GM10248 (cell line): ENCODE measurements at regions of chr1 and their contacts with region 1.

Region 1: GRCh38 chr1:30718636-30719405 is 4.6 kb downstream of the MATN1 start:
- DNase-seq: peak; percentile 68
- CTCF ChIP-seq: peak; percentile 95

Region 2: GRCh38 chr1:30732277-30732996 is 13.6 kb after region 1 on chr1:
- CTCF ChIA-PET with region 1: interaction called, 81 read pairs
- POLR2A ChIA-PET with region 1: interaction called, 8 read pairs
- DNase-seq: peak; percentile 68
- CTCF ChIP-seq: no peak

Region 3: GRCh38 chr1:30743584-30744059 is 24.8 kb after region 1 on chr1:
- CTCF ChIA-PET with region 1: interaction called, 35 read pairs
- POLR2A ChIA-PET with region 1: interaction called, 7 read pairs
- DNase-seq: peak; percentile 81
- CTCF ChIP-seq: no peak

Region 4: DNA sequence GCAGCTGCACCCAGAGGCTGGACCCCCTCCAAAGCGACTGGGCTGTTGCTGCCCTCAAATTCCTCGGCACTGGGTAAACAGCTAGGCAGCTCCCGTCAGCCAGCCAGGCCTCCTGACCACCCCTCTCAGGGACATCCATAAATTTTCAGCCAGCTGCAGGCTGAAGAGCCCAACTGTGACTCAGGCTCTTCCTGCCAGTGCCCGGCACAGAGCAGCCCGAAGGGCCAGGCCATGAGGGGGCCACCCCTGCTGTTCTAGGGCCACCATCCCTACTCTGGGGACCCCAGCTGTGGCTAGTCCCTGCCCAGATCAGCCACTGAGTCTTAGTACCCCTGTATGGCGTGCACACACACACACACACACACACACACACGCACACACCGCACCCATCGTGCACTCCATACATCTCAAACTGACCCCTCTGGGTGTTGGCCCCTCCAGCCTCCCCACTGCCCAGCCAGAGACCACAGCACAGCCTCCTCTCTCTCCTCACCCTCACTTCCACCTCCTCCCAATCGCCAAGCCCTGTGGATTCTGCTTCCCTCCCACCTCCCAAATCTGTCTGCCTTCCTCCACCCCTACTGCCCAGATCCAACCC is 44.9 kb after region 1 on chr1:
- CTCF ChIA-PET with region 1: interaction called, 34 read pairs
- POLR2A ChIA-PET with region 1: no interaction called
- DNase-seq: no peak
- CTCF ChIP-seq: no peak

Region 5: GRCh38 chr1:30790850-30791778 is 72.3 kb after region 1 on chr1:
- CTCF ChIA-PET with region 1: interaction called, 611 read pairs
- POLR2A ChIA-PET with region 1: no interaction called
- DNase-seq: peak; percentile 50
- CTCF ChIP-seq: no peak

Region 6: GRCh38 chr1:30911046-30911954 is 192.5 kb after region 1 on chr1:
- CTCF ChIA-PET with region 1: interaction called, 61 read pairs
- POLR2A ChIA-PET with region 1: no interaction called
- DNase-seq: peak; percentile 78
- CTCF ChIP-seq: peak; percentile 74

Region 7: GRCh38 chr1:30929135-30929889 is 210.5 kb after region 1 on chr1:
- CTCF ChIA-PET with region 1: interaction called, 29 read pairs
- POLR2A ChIA-PET with region 1: no interaction called
- DNase-seq: peak; percentile 68
- CTCF ChIP-seq: peak; percentile 76